ENCODE measurements at regions of chr7 and their contacts with region 1.

Region 1: DNA sequence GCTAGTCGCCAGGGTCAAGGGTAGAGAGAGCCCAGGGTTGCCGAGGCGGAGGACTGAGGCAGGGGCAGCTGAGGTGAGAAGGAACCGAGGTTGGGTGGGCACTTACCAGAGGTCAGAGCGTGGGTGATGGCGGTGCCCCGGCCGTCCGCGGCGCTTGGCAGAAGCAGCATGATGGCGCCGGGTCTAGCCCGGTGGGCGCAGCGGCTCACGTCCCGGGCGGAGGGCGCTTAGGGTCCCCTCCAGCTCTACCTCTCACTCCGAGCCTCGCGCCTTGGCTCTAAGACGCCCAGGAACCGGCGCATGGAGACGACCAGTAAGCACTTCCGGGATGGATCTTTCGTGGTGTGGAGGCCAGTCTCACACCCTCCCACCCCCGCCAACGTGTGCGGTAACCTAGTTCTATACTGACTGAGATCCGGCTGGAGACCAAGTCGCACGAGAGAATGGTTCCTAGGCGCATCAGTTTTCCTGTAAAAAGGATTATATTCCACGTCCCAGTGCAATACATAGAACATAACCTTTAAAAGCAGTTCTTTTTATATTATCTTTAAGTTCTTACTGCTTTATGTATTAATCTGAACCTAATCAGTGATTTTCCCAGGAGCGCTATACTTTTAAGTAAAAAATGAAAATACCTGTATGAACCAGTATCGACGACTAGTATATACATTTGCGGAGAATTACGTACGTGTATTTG is at the start of gene DNAJC2:
- DNase-seq: peak; percentile 93
- ATAC-seq: peak; percentile 83
- H3K4me3 Mint-ChIP-seq: peak within 1 kb of the TSS; percentile 94
- H3K27ac Mint-ChIP-seq: peak within 1 kb of the TSS; percentile 99
- H3K4me1 Mint-ChIP-seq: peaks cover 44% of the 10 kb centered on the region
- H3K27me3 Mint-ChIP-seq: no peaks in the 10 kb centered on the region
- CTCF ChIP-seq: no peak
- total RNA-seq, gene DNAJC2: 45.8 to 48.9 TPM

Region 2: GRCh38 chr7:103296901-103297836 is 47.4 kb before region 1 on chr7 and contains the start of gene PMPCB:
- CTCF ChIA-PET with region 1: interaction called, 4 read pairs
- POLR2A ChIA-PET with region 1: interaction called, 6 read pairs
- intact Hi-C with region 1: loop called (anchors 5 kb)
- DNase-seq: peak; percentile 99
- ATAC-seq: peak; percentile 99
- H3K4me3 Mint-ChIP-seq: peak within 1 kb of the TSS; percentile 98
- H3K27ac Mint-ChIP-seq: peak within 1 kb of the TSS; percentile 91
- H3K4me1 Mint-ChIP-seq: peaks cover 26% of the 10 kb centered on the region
- H3K27me3 Mint-ChIP-seq: no peaks in the 10 kb centered on the region
- CTCF ChIP-seq: peak; percentile 86
- total RNA-seq, gene PMPCB: 80.5 to 89.3 TPM

Region 3: GRCh38 chr7:103307503-103308231 is 36.9 kb before region 1 on chr7:
- CTCF ChIA-PET with region 1: interaction called, 6 read pairs
- POLR2A ChIA-PET with region 1: interaction called, 15 read pairs
- intact Hi-C with region 1: loop called (anchors 5 kb)
- DNase-seq: no peak
- ATAC-seq: no peak
- H3K4me3 Mint-ChIP-seq: no peak overlapping the region
- H3K27ac Mint-ChIP-seq: peak overlapping the region; percentile 55
- H3K4me1 Mint-ChIP-seq: peaks cover 22% of the 10 kb centered on the region
- H3K27me3 Mint-ChIP-seq: no peaks in the 10 kb centered on the region
- CTCF ChIP-seq: no peak

Region 4: GRCh38 chr7:103445228-103446048 is 100.8 kb after region 1 on chr7:
- CTCF ChIA-PET with region 1: no interaction called
- POLR2A ChIA-PET with region 1: no interaction called
- intact Hi-C with region 1: no loop called
- DNase-seq: no peak
- ATAC-seq: peak; percentile 13
- H3K4me3 Mint-ChIP-seq: peak overlapping the region; percentile 60
- H3K27ac Mint-ChIP-seq: no peak overlapping the region
- H3K4me1 Mint-ChIP-seq: peaks cover 10% of the 10 kb centered on the region
- H3K27me3 Mint-ChIP-seq: peaks cover 50% of the 10 kb centered on the region
- CTCF ChIP-seq: no peak

Measured in activated CD8-positive, alpha-beta T cell treated with anti-CD3 and anti-CD28 coated beads for 36 hours (primary cell).